ENCODE measurements at regions of chr22 and their contacts with region 1.

Region 1: GRCh38 chr22:38114484-38115398 is 4.3 kb upstream of the BAIAP2L2 start:
- DNase-seq: peak; percentile 88
- ATAC-seq: peak; percentile 93 to 95

Region 2: GRCh38 chr22:37933711-37934376 is 180.9 kb before region 1 on chr22:
- intact Hi-C with region 1: no loop called
- DNase-seq: peak; percentile 91
- ATAC-seq: peak; percentile 96 to 98

Region 3: GRCh38 chr22:38065539-38065938 is 49.2 kb before region 1 on chr22:
- intact Hi-C with region 1: no loop called
- DNase-seq: peak; percentile 12
- ATAC-seq: no peak

Region 4: DNA sequence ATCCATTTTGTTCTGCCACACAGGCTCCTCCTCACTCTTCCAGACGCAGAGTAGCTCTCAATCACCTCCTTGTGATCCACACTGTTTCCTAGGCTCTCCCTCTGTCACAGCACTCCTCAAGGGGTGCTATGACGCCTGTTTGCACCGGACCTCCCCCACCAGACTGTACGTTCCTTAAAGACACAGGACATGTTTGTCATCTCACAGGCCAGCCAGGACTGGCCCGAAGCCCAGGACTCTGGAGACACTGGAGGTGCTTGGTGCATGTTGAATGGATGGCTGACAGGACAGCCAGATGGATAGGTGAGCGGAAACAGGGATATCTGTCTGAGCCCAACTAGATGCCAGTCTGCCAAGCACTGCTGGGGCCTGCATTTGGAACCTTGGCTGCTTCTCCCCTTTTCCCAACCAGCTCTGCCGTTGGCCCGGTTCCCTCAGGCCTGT is 53.3 kb after region 1 on chr22:
- intact Hi-C with region 1: loop called (anchors 10 kb)
- DNase-seq: peak; percentile 73
- ATAC-seq: peak; percentile 53 to 64

Region 5: DNA sequence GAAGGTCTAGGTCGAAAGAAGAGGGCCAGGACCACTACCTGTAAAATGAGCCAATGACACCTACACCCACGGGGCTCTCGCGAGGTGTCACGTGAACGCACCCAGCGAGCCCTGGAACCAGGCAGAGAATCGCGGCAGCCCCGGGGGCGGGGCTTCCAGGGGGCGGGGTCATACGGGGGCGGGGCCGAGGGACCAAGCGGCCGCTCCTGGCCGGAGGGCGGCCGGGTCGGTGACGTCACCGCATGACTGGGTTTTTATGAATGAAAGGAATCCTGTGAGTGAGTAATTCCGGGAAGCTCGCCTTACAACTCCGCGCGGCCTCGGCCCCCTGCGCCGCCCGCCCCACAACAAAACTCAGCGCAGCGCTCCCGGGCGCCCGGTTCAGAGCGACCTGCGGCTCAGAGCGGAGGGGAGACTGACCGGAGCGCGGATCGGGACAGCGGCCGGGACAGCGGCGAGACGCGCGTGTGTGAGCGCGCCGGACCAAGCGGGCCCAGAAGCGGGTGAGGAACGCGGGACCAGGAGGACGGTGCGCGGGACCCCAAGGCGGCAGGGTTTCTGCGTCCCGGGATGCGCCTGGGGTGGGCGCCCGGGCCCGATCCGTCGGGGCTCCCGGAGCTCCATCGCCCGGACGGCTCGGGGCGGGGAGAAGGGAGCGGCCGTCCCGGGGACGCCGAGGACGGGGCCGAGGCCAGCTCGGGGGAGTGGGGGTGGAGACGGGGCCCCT is 87.1 kb after region 1 on chr22 and contains the start of gene MAFF:
- intact Hi-C with region 1: loop called in 1 of 2 experiments (anchors 10 kb)
- DNase-seq: peak; percentile 98
- ATAC-seq: peak; percentile 83 to 85
- total RNA-seq, gene MAFF: 9.4 to 27.8 TPM

Region 6: DNA sequence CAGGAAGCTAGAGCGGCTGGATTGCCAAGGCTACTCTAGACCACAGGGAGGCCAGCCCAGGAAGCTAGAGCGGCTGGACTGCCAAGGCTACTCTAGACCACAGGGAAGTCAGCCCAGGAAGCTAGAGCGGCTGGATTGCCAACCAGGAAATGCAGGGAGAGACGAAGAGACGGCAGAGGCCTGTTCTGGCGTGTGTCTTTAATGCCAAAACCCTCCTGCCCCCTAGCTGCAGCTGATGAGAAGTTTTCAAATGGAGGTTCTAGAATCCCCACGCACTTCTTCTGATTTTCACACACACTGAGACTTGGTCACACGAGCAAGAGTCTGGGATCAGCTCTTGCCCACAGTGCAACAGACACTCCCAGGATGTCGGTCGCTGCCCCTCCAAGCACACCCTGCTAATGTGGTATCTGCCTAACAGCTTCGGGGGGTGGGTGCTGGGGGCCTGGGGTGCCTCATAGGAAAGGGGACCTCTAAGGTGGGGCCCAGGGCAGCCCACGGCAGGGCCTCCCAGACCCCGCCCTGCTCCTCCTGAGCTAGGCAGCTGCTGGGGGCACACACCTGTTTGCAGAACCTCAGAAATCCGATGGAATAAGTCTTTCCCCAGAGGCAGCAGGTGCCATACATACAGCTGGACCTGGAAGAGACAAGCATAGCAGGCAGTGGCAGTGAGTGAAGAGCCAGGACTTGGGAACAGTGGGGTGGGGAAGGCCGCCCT is 115.5 kb after region 1 on chr22:
- intact Hi-C with region 1: loop called in 1 of 2 experiments (anchors 10 kb)
- DNase-seq: no peak
- ATAC-seq: peak in 1 of 2 donors; percentile 9

Region 7: DNA sequence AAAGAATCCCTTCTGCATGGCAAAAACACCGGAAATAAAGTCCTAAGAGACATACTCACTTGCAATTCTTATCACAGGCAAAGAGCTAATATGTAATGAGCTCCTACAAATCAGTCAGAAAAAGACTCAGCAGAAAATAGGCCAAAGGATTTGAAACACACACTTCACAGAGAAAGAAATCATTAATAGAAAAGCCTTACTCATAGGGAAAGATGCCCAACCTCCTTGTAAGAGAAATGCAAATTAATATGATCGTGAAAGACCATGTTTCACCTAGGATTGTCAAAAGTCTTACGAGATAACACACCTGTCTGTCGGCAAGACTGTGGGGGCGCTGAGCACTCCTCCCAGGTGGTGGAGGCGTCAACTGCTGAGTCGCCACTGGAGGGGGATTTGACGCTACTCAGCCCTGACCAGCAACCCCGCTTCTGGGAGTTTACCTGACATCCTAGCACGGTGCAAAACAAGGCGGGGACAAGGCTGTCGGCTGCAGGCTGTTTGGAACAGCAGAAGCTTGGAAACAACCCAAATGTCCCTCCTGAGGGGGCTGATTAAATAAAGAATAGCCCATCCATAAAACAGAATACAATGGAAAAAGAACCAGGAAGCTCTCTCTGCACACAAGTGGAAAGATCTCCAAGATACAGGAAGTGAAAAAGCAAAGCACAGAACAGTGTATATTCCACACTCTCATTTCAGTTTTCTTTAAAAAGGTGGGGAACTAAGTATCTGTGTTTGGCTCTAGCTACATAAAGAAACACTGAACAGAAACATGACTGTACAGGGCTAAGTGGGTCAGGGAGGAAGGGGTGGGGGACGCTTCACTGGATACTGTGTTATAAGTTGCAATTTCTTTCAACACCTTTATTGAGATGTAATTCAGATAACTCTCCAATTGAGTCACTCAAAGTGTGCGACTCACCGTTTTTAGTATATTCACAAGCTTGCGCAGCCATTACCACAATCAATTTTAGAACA is 191.0 kb after region 1 on chr22:
- intact Hi-C with region 1: loop called in 1 of 2 experiments (anchors 10 kb)
- DNase-seq: no peak
- ATAC-seq: peak; percentile 22 to 36

Measured in left cardiac atrium (tissue), 4 donors.